Endothelial cell of umbilical vein (primary cell): ENCODE measurements at regions of chr5 and their contacts with region 1.

Region 1: GRCh38 chr5:151447174-151448037 is at the start of gene SLC36A1:
- DNase-seq: peak; percentile 89
- H3K4me3 ChIP-seq: peak within 1 kb of the TSS; percentile 24 to 68 (median 57)
- H3K27ac ChIP-seq: no peak within 1 kb of the TSS
- H3K4me1 ChIP-seq: peaks cover 12% of the 10 kb centered on the region
- H3K27me3 ChIP-seq: peaks cover 3 to 7% of the 10 kb centered on the region in 2 experiments
- CTCF ChIP-seq: peak; percentile 96 to 98
- POLR2A ChIP-seq: peak; percentile 64
- total RNA-seq, gene SLC36A1: 8.6 and 11.8 TPM in 2 replicates

Region 2: GRCh38 chr5:151252762-151253604 is 194.4 kb before region 1 on chr5 and contains the start of gene GM2A:
- CTCF ChIA-PET with region 1: interaction called, 4 read pairs
- POLR2A ChIA-PET with region 1: no interaction called
- dilution Hi-C with region 1: no loop called
- intact Hi-C with region 1: loop called (anchors 2 kb)
- DNase-seq: peak; percentile 100
- H3K4me3 ChIP-seq: peak within 1 kb of the TSS; percentile 48 to 75 (median 55)
- H3K27ac ChIP-seq: no peak within 1 kb of the TSS
- H3K4me1 ChIP-seq: peaks cover 5% of the 10 kb centered on the region
- H3K27me3 ChIP-seq: no peaks in the 10 kb centered on the region
- CTCF ChIP-seq: no peak
- POLR2A ChIP-seq: peak; percentile 46
- total RNA-seq, gene GM2A: 21.2 and 22.5 TPM in 2 replicates

Region 3: DNA sequence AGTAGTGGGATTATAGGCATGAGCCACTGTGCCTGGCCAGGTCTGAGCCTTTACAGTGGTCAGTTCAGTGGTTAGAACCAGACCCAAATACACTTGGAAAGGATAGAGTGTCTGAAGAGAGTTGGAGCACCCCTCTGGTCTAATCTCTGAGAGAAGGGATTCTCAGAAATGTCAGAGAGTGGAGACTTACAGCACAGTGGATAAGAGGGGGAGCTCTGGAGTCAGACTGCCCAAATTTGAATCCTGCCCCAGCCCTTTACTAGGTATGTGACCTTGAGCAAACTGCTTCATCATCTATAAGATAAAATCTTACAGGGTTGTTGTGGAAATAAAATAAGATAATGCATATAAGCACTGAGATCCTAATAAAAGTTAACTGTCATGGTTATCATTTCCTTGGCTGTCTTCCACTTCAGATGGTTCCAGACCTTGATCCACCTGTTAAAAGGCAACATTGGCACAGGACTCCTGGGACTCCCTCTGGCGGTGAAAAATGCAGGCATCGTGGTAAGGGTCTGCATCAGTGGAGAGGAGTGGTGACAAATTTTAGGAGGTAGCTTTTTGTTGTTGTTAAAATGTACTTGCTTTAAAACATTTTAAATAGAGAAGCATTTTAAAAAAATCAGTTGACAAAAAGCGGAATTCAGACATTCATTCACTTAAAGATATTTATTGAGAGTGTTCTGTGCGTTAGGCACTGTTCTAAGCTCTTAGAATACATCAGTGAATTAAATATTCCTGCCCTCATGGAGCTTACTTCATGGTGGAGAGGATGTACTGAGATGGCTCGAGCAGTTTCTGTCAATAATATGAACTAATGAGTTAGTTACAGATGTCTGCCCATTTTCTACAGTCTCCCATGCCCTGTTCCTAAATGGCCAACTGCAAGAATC is 16.0 kb after region 1 on chr5:
- CTCF ChIA-PET with region 1: interaction called, 49 read pairs
- POLR2A ChIA-PET with region 1: interaction called, 3 read pairs
- dilution Hi-C with region 1: no loop called
- intact Hi-C with region 1: no loop called
- DNase-seq: no peak
- H3K4me3 ChIP-seq: no peak overlapping the region
- H3K27ac ChIP-seq: no peak overlapping the region
- H3K4me1 ChIP-seq: no peaks in the 10 kb centered on the region
- H3K27me3 ChIP-seq: no peaks in the 10 kb centered on the region
- CTCF ChIP-seq: peak; percentile 17 to 49
- POLR2A ChIP-seq: no peak

Region 4: DNA sequence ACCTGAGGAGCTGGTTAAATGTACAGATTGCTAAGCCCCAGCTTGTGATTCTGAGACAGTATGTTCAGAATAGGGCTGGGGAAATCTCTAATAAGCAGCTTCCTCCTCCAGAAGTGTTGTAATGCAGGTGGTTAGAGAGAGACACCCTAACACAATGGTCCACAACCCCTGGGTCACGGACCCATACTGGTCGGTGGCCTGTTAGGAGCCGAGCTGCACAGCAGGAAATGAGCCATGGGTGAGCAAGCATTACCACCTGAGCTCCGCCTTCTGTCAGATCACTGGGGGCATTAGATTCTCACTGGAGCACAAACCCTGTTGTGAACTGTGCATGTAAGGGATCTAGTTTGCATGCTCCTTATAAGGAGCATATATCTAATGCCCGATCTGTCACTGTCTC is 61.8 kb after region 1 on chr5:
- CTCF ChIA-PET with region 1: interaction called, 10 read pairs
- POLR2A ChIA-PET with region 1: no interaction called
- dilution Hi-C with region 1: no loop called
- intact Hi-C with region 1: no loop called
- DNase-seq: peak; percentile 29
- H3K4me3 ChIP-seq: no peak overlapping the region
- H3K27ac ChIP-seq: no peak overlapping the region
- H3K4me1 ChIP-seq: peaks cover 7% of the 10 kb centered on the region
- H3K27me3 ChIP-seq: no peaks in the 10 kb centered on the region
- CTCF ChIP-seq: no peak
- POLR2A ChIP-seq: no peak

Region 5: DNA sequence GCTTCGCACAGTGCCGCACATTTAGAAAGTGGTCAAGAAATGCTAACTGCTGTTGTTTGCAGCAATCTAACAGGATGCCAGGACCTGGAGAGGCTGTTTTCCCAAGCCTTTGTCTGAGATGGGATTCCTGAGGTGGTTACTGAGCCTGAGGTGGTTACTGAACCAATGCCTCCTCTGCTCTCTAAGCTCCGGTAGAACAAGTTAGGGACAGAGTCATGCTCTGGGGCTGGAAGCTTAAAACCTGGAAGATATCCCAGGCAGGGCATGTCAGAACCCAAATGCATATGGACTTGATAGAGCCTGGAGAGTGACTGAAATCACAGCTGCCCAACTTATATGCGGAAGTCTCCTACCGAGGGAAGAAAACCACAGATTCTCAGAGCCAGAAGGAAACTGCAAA is 190.3 kb after region 1 on chr5:
- CTCF ChIA-PET with region 1: interaction called, 10 read pairs
- POLR2A ChIA-PET with region 1: no interaction called
- dilution Hi-C with region 1: no loop called
- intact Hi-C with region 1: no loop called
- DNase-seq: no peak
- H3K4me3 ChIP-seq: no peak overlapping the region
- H3K27ac ChIP-seq: no peak overlapping the region
- H3K4me1 ChIP-seq: peaks cover 8% of the 10 kb centered on the region
- H3K27me3 ChIP-seq: peaks cover 3 to 4% of the 10 kb centered on the region in 2 experiments
- CTCF ChIP-seq: no peak
- POLR2A ChIP-seq: no peak

Region 6: GRCh38 chr5:151659001-151659754 is 211.8 kb after region 1 on chr5:
- CTCF ChIA-PET with region 1: interaction called, 267 read pairs
- POLR2A ChIA-PET with region 1: no interaction called
- dilution Hi-C with region 1: no loop called
- intact Hi-C with region 1: no loop called
- DNase-seq: peak; percentile 84
- H3K4me3 ChIP-seq: no peak overlapping the region
- H3K27ac ChIP-seq: no peak overlapping the region
- H3K4me1 ChIP-seq: peaks cover 16% of the 10 kb centered on the region
- H3K27me3 ChIP-seq: no peaks in the 10 kb centered on the region
- CTCF ChIP-seq: peak; percentile 85 to 92
- POLR2A ChIP-seq: peak; percentile 49